Prostate gland (tissue), 2 donors: ENCODE measurements at regions of chr19 and their contacts with region 1.

Region 1: DNA sequence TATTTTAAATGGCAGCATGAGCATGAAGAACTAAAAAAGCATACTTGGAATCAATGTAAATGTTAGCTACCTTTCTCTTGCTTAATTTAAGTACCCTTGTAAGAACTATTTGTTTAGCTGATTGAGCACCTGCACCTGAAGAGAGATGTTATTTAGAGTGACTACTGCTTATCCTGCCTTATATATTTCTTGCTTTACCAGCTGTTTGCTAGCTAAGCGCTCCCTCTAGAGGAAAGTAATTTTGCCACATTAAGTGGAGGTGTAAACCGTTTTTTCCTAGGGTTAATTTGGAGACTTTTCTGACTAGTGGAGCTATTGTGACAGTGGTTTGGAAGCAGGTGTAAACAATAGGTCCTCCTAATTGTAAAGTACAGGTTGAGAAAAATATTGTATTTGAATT is 19.4 kb upstream of the PSG2 start:
- DNase-seq: no peak
- H3K4me3 ChIP-seq: no peak overlapping the region
- H3K27ac ChIP-seq: no peak overlapping the region
- H3K4me1 ChIP-seq: no peaks in the 10 kb centered on the region
- H3K27me3 ChIP-seq: no peaks in the 10 kb centered on the region
- CTCF ChIP-seq: no peak
- POLR2A ChIP-seq: no peak

Region 2: GRCh38 chr19:42794765-42795164 is 307.2 kb before region 1 on chr19:
- intact Hi-C with region 1: loop called (anchors 10 kb)
- DNase-seq: no peak
- H3K4me3 ChIP-seq: no peak overlapping the region
- H3K27ac ChIP-seq: no peak overlapping the region
- H3K4me1 ChIP-seq: no peaks in the 10 kb centered on the region
- H3K27me3 ChIP-seq: no peaks in the 10 kb centered on the region
- CTCF ChIP-seq: no peak
- POLR2A ChIP-seq: no peak